Activated CD4-positive, alpha-beta T cell treated with anti-CD3 and anti-CD28 coated beads for 36 hours (primary cell): ENCODE measurements at regions of chr11 and their contacts with region 1.

Region 1: GRCh38 chr11:129364143-129364654 is 11.4 kb upstream of the BARX2 start:
- DNase-seq: peak; percentile 91
- ATAC-seq: peak; percentile 99
- H3K4me3 Mint-ChIP-seq: no peak overlapping the region
- H3K27ac Mint-ChIP-seq: no peak overlapping the region
- H3K4me1 Mint-ChIP-seq: no peaks in the 10 kb centered on the region
- H3K27me3 Mint-ChIP-seq: peaks cover 32% of the 10 kb centered on the region

Region 2: DNA sequence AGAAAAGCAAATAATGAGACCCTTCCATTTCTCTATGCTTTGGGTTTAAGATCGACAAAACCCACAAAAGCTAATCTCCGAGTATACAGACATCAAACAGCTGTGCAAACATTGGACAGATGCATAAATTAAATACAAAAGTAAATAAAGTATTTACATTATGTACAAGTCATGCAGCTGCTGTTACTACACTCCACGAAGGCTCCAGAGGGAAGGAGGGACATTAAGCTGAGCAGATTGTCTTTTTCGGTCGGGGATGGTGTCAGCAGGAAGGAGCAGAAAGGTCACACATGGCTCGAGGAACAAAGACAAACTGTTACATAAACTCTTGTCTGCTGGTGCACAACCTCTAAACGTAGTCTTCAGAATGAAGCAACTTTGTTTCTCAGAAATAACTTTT is 77.4 kb before region 1 on chr11:
- CTCF ChIA-PET with region 1: no interaction called
- POLR2A ChIA-PET with region 1: no interaction called
- intact Hi-C with region 1: no loop called
- DNase-seq: no peak
- ATAC-seq: no peak
- H3K4me3 Mint-ChIP-seq: no peak overlapping the region
- H3K27ac Mint-ChIP-seq: no peak overlapping the region
- H3K4me1 Mint-ChIP-seq: peaks cover 13% of the 10 kb centered on the region
- H3K27me3 Mint-ChIP-seq: peaks cover 18% of the 10 kb centered on the region

Region 3: GRCh38 chr11:129750349-129751292 is 386.4 kb after region 1 on chr11:
- CTCF ChIA-PET with region 1: interaction called, 29 read pairs
- POLR2A ChIA-PET with region 1: no interaction called
- intact Hi-C with region 1: loop called (anchors 1 kb)
- DNase-seq: peak; percentile 88
- ATAC-seq: peak; percentile 93
- H3K4me3 Mint-ChIP-seq: no peak overlapping the region
- H3K27ac Mint-ChIP-seq: no peak overlapping the region
- H3K4me1 Mint-ChIP-seq: peaks cover 3% of the 10 kb centered on the region
- H3K27me3 Mint-ChIP-seq: peaks cover 12% of the 10 kb centered on the region